PC-3 (cell line): ENCODE measurements at regions of chr10 and their contacts with region 1.

Region 1: DNA sequence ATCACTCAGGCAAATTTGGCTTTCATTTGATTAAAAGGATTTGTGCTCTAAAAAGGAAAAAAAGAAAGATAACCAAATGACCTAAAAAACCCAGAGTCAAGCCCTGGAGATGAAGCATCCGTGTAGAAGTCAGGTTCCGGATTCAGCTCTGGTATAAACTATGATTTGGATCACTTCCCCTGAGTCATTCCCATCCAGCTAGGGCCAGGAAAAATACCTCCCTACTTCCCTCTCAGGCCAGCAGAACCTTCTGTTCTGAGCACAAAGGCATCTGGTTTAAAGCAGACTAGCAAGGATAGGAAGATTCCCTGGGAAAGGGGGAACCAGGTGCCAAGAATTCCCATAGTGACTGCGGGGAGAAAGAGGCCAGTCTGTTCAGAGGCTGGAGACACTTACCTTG is 25.7 kb upstream of the NDST2 start:
- DNase-seq: peak; percentile 74
- ATAC-seq: peak; percentile 85
- H3K4me3 ChIP-seq: no peak overlapping the region
- H3K27ac ChIP-seq: peak overlapping the region; percentile 25
- H3K4me1 ChIP-seq: peaks cover 22% of the 10 kb centered on the region
- H3K27me3 ChIP-seq: no peaks in the 10 kb centered on the region
- CTCF ChIP-seq: no peak

Region 2: GRCh38 chr10:73730153-73730906 is 106.7 kb before region 1 on chr10:
- CTCF ChIA-PET with region 1: no interaction called
- POLR2A ChIA-PET with region 1: no interaction called
- intact Hi-C with region 1: no loop called
- DNase-seq: peak; percentile 100
- ATAC-seq: peak; percentile 87
- H3K4me3 ChIP-seq: peak overlapping the region; percentile 69
- H3K27ac ChIP-seq: peak overlapping the region; percentile 72
- H3K4me1 ChIP-seq: peaks cover 9% of the 10 kb centered on the region
- H3K27me3 ChIP-seq: no peaks in the 10 kb centered on the region
- CTCF ChIP-seq: no peak

Region 3: GRCh38 chr10:73779539-73780197 is 57.4 kb before region 1 on chr10:
- CTCF ChIA-PET with region 1: interaction called, 4 read pairs
- POLR2A ChIA-PET with region 1: interaction called, 14 read pairs
- intact Hi-C with region 1: no loop called
- DNase-seq: no peak
- ATAC-seq: no peak
- H3K4me3 ChIP-seq: no peak overlapping the region
- H3K27ac ChIP-seq: no peak overlapping the region
- H3K4me1 ChIP-seq: peaks cover 48% of the 10 kb centered on the region
- H3K27me3 ChIP-seq: no peaks in the 10 kb centered on the region
- CTCF ChIP-seq: no peak

Region 4: DNA sequence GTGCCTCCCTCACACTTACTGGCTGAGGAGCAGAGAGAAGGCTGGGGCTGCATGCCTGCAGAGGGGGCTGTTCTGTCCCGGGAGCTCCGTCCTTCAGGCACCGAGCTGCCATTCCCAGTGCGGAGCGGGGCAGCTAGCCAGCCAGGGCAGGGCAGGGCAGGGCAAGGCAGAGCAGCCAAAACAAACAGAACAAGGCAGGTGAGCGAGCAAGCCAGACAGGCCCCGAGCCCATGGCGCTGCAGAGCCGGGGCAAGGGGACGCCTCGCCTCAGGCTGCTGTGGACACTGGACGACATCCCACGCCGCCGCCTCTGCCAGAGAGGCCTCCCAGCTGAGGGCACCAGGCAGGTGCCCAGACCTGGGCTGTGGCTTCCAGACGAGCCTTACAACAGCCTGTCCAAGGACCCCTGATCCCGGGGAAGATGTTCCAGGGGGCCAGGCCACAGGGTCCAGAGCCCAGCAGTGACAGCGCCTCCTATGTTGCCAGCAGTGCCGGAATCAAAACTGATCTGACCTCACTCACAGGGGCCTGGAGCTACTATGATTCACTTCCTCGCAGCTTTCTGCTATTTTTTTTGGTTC is 17.5 kb before region 1 on chr10:
- CTCF ChIA-PET with region 1: interaction called, 10 read pairs
- POLR2A ChIA-PET with region 1: interaction called, 3 read pairs
- intact Hi-C with region 1: no loop called
- DNase-seq: peak; percentile 97
- ATAC-seq: peak; percentile 94
- H3K4me3 ChIP-seq: peak overlapping the region; percentile 33
- H3K27ac ChIP-seq: peak overlapping the region; percentile 66
- H3K4me1 ChIP-seq: peaks cover 22% of the 10 kb centered on the region
- H3K27me3 ChIP-seq: no peaks in the 10 kb centered on the region
- CTCF ChIP-seq: peak; percentile 89

Region 5: DNA sequence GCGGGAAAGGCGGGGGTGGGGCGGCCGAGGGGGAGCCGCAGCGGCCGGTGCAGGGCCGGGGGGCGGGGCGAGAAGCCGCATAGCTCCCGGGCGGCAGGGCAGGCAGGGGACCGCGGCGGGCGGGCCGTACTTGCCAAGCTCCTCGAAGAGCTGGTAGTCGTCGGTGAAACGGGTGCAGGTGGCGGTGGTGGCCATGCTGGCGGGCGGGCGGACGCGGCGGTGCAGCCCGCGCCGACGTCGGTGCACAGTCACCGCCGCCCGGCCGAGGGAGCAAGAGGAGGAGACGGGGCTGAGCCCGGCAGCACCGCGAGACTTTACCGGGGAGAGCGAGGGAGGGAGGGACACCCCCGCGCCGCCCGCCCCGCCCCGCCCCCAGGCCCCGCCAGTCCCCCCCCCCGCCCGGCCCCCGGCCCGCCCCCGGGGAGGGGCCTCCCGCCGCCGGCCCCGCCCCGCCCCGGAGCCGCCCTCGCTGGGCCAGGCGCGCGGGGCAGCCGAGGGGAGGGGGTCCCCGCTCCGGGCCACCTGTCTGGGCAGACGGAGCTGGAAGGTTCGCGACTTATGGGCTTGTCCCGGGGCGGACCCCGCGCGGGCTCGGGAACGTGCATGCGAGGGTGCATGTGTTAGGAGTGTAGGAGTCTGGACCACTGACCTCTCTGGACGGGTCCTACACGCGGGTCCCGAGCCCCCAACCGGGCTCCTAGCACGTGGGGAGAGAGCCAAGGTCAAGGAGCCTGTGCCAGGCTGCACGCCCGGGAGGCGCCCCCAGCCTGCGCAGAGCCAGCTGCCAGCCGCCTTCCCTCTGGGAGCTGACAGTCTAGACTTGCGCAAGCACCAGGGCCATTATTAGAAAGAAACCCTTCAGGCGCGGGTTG is 37.4 kb after region 1 on chr10 and contains the start of gene CAMK2G:
- CTCF ChIA-PET with region 1: interaction called, 3 read pairs
- POLR2A ChIA-PET with region 1: interaction called, 16 read pairs
- intact Hi-C with region 1: loop called (anchors 5 kb)
- DNase-seq: peak; percentile 100
- ATAC-seq: peak; percentile 87
- H3K4me3 ChIP-seq: peak within 1 kb of the TSS; percentile 68
- H3K27ac ChIP-seq: no peak within 1 kb of the TSS
- H3K4me1 ChIP-seq: peaks cover 48% of the 10 kb centered on the region
- H3K27me3 ChIP-seq: no peaks in the 10 kb centered on the region
- CTCF ChIP-seq: no peak
- total RNA-seq, gene CAMK2G: 170 and 179 TPM in 2 replicates

Region 6: GRCh38 chr10:73946253-73947155 is 109.4 kb after region 1 on chr10:
- CTCF ChIA-PET with region 1: no interaction called
- POLR2A ChIA-PET with region 1: interaction called, 23 read pairs
- intact Hi-C with region 1: no loop called
- DNase-seq: peak; percentile 69
- ATAC-seq: peak; percentile 17
- H3K4me3 ChIP-seq: no peak overlapping the region
- H3K27ac ChIP-seq: no peak overlapping the region
- H3K4me1 ChIP-seq: peaks cover 8% of the 10 kb centered on the region
- H3K27me3 ChIP-seq: no peaks in the 10 kb centered on the region
- CTCF ChIP-seq: peak; percentile 83